Adrenal gland (tissue), 19 donors: ENCODE measurements at regions of chr13 and their contacts with region 1.

Region 1: GRCh38 chr13:31431722-31432137 is 232.0 kb downstream of the B3GLCT start:
- DNase-seq: peak; percentile 18 to 73 (median 41)
- H3K4me3 ChIP-seq: no peak overlapping the region
- H3K27ac ChIP-seq: no peak overlapping the region
- H3K4me1 ChIP-seq: no peaks in the 10 kb centered on the region
- H3K27me3 ChIP-seq: no peaks in the 10 kb centered on the region
- CTCF ChIP-seq: peak; percentile 27 to 89 (median 54)
- POLR2A ChIP-seq: no peak

Region 2: GRCh38 chr13:31174018-31174417 is 257.7 kb before region 1 on chr13:
- intact Hi-C with region 1: no loop called
- DNase-seq: no peak
- H3K4me3 ChIP-seq: no peak overlapping the region
- H3K27ac ChIP-seq: no peak overlapping the region
- H3K4me1 ChIP-seq: no peaks in the 10 kb centered on the region
- H3K27me3 ChIP-seq: no peaks in the 10 kb centered on the region
- CTCF ChIP-seq: no peak
- POLR2A ChIP-seq: no peak

Region 3: DNA sequence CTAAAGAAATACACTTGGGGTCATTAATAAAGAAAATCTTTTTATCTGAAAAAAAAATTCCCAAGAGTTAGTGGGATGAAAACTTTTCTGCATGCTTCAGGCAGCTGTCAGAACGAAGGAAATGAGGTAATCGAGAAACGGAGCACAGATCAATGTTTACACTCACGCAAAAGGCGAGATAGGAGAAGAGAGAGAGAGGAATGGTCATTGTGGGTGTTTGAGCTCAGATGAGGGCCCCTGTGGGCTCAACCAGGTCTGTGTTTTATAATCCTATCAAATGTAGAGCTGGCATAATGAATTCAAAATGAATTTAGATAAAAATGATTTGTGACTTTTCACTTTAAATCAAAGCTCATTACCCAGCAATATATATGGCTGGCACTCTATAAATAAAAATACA is 301.3 kb after region 1 on chr13:
- intact Hi-C with region 1: loop called (anchors 5 to 10 kb)
- DNase-seq: no peak
- H3K4me3 ChIP-seq: peak overlapping the region in 1 of 4 donors; percentile 34
- H3K27ac ChIP-seq: no peak overlapping the region
- H3K4me1 ChIP-seq: no peaks in the 10 kb centered on the region
- H3K27me3 ChIP-seq: no peaks in the 10 kb centered on the region
- CTCF ChIP-seq: no peak
- POLR2A ChIP-seq: no peak

Region 4: DNA sequence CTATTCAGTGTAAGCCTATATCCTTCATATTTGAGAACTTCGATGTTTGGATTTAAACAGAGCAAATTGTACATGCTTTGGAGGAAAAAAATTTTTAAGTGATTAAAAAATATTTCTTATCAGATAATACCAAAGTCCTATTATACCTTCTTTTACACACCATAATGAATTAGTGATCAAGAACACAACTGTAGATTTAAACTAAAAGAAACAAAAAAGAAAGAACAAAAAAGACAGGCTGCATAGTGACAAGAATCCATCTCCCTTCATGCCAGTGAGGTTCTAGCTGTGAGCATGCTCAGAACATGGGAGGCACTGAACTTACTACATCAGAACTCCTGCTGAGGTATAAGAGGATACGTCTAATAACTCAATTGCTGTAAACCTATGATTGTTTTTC is 307.5 kb after region 1 on chr13 and contains the start of gene RXFP2:
- intact Hi-C with region 1: loop called (anchors 5 to 10 kb)
- DNase-seq: no peak
- H3K4me3 ChIP-seq: no peak within 1 kb of the TSS
- H3K27ac ChIP-seq: no peak within 1 kb of the TSS
- H3K4me1 ChIP-seq: no peaks in the 10 kb centered on the region
- H3K27me3 ChIP-seq: peaks cover 5% of the 10 kb centered on the region
- CTCF ChIP-seq: no peak
- POLR2A ChIP-seq: no peak
- total RNA-seq, gene RXFP2: 0.06 to 0.55 (median 0.40) TPM in 6 of 9 donors, not detected in the others

Region 5: DNA sequence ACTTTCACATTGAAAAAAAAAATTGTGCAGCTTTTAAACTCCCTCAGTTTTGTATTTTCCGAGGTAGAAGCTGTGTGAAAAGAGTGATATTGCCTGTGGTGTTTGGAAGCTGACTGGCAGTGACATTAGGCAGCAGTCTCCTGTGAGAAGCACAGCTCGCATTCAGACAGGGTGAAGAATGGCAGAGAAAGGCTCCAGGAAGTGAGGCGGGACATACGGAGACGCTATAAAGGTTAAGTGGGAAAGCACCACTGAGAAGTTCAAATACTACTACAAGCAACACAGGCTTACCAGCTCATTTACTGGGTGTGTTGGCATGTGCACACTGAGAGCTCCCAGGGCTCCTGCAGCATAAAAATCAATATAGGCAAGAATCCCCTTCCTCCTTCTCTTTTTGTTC is 396.0 kb after region 1 on chr13:
- intact Hi-C with region 1: no loop called
- DNase-seq: no peak
- H3K4me3 ChIP-seq: no peak overlapping the region
- H3K27ac ChIP-seq: no peak overlapping the region
- H3K4me1 ChIP-seq: no peaks in the 10 kb centered on the region
- H3K27me3 ChIP-seq: no peaks in the 10 kb centered on the region
- CTCF ChIP-seq: no peak
- POLR2A ChIP-seq: no peak